Activated CD8-positive, alpha-beta memory T cell treated with anti-CD3 and anti-CD28 coated beads, Interleukin-2, amount 10 ng/mL, durations not matched to agents 7 days and 5 days (primary cell): ENCODE measurements at regions of chr2 and their contacts with region 1.

Region 1: DNA sequence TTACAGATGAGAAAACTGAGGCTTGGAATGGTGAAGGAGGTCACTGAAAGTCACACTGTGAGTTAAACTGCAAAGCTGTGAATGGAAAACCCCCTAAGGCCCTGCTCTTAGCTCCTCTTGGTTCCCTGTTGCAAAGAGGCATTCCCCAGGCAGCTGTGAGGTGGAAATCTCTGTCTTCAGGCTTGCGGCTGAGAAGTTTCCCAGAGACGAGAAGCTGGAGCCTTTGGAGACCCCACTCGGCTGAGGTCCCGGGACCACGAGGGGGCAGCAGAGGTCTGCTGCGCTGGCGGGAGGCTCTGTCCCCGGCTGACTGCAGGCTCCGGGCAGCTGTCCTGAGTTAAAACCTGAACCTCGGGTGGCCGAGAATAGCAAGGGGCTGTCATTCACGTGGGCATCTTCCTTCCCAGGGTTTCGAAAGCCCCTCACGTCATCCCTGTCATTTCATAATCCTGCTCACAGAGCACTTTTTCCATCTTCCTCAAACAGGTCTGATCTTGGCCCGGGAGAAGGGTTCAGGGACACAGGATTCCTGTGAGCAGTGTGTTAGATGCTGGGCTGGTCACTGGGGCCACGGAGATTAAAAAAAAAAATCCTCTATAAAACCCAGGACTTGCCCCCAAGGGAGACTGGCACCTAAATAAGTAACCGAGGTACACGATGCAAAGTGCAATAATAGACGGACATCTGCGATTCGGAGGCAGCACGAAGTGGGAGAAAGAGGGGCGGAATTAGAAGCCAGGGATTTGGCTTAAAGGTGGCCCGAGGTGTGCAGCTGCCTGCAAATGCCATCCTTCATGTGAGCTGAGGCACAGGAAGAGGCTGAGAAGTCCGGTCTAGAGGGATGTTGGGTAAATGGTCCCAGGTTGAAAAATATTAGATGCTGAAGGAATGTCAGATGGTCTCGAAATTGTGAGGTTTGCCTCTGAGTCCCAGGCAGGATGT is 24.6 kb upstream of the ATOH8 start:
- DNase-seq: peak; percentile 81
- ATAC-seq: peak; percentile 93
- H3K4me3 Mint-ChIP-seq: no peak overlapping the region
- H3K27ac Mint-ChIP-seq: no peak overlapping the region
- H3K4me1 Mint-ChIP-seq: peaks cover 9% of the 10 kb centered on the region
- H3K27me3 Mint-ChIP-seq: peaks cover 41% of the 10 kb centered on the region

Region 2: GRCh38 chr2:85642725-85643124 is 86.4 kb before region 1 on chr2:
- CTCF ChIA-PET with region 1: interaction called, 17 read pairs
- DNase-seq: peak; percentile 59
- ATAC-seq: peak; percentile 90
- H3K4me3 Mint-ChIP-seq: no peak overlapping the region
- H3K27ac Mint-ChIP-seq: peak overlapping the region; percentile 82
- H3K4me1 Mint-ChIP-seq: peaks cover 23% of the 10 kb centered on the region
- H3K27me3 Mint-ChIP-seq: no peaks in the 10 kb centered on the region

Region 3: DNA sequence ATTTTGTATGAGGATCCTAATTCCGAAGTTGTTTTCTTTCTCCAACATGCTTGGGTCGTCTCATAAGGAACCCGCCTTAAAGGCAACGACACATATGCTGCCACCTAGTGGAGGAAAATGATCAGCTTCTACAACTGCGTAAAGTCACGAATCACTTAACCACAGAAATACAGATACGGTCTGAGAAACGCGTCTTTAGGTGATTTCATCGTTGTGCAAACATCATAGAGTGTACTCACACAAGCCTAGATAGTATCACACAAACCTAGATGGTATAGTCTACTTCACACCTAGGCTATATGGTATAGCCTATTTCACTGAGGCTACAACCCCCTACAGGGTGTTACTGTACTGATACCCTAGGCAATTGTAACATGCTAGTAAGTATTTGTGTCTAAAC is 21.9 kb before region 1 on chr2:
- CTCF ChIA-PET with region 1: interaction called, 22 read pairs
- DNase-seq: peak; percentile 85
- ATAC-seq: peak; percentile 82
- H3K4me3 Mint-ChIP-seq: no peak overlapping the region
- H3K27ac Mint-ChIP-seq: peak overlapping the region; percentile 77
- H3K4me1 Mint-ChIP-seq: peaks cover 69% of the 10 kb centered on the region
- H3K27me3 Mint-ChIP-seq: peaks cover 17% of the 10 kb centered on the region

Region 4: GRCh38 chr2:85741833-85742455 is 12.8 kb after region 1 on chr2:
- CTCF ChIA-PET with region 1: interaction called, 20 read pairs
- DNase-seq: no peak
- ATAC-seq: no peak
- H3K4me3 Mint-ChIP-seq: no peak overlapping the region
- H3K27ac Mint-ChIP-seq: no peak overlapping the region
- H3K4me1 Mint-ChIP-seq: no peaks in the 10 kb centered on the region
- H3K27me3 Mint-ChIP-seq: peaks cover 83% of the 10 kb centered on the region

Region 5: GRCh38 chr2:85804583-85804982 is 75.4 kb after region 1 on chr2:
- CTCF ChIA-PET with region 1: interaction called, 12 read pairs
- DNase-seq: peak; percentile 58
- ATAC-seq: peak; percentile 51
- H3K4me3 Mint-ChIP-seq: no peak overlapping the region
- H3K27ac Mint-ChIP-seq: no peak overlapping the region
- H3K4me1 Mint-ChIP-seq: peaks cover 8% of the 10 kb centered on the region
- H3K27me3 Mint-ChIP-seq: peaks cover 23% of the 10 kb centered on the region

Region 6: GRCh38 chr2:85819811-85820510 is 90.8 kb after region 1 on chr2:
- CTCF ChIA-PET with region 1: interaction called, 93 read pairs
- DNase-seq: no peak
- ATAC-seq: no peak
- H3K4me3 Mint-ChIP-seq: no peak overlapping the region
- H3K27ac Mint-ChIP-seq: no peak overlapping the region
- H3K4me1 Mint-ChIP-seq: no peaks in the 10 kb centered on the region
- H3K27me3 Mint-ChIP-seq: peaks cover 47% of the 10 kb centered on the region

Region 7: DNA sequence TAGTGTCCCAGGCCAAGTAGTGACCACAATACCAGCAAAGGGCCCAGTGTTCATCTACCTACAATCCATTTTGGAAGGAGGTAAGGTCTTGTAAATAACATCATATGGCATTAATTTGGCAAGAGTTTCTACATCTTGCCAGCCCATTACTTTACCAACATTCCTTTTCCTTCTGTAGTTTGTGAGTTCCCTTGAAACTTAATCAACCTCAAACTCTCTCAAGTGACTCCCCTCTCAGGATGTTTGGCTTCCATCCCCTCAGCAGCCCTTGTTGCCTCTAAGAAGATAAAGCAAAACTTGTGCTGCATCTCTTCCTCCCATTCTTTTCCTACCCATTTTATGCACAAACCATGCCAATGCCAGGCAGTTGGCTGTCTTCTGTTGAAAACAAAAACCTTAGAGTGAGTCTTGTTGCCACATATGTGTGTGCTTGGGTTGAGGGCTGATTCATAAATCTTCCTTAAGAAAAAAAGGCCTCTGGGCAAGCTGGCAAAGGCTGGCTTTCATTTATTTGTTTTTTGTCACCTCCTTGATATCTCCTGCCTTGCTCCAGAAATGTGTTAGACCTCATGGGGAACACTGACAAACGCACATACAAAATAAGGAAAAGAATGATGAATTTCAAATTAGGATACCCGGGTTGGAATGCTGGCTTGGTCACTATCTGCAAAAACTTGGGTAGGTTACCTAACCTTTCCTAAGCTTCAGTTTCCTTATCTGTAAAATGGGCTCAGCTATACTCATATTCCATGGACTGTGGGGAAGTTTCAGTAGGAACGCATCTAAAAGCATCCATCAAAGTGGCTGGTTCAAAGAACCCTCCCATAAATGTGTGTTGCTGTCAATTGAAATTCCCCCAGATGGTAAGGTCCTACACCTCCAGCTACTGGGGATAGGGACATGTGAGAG is 189.0 kb after region 1 on chr2:
- CTCF ChIA-PET with region 1: no interaction called
- DNase-seq: no peak
- ATAC-seq: no peak
- H3K4me3 Mint-ChIP-seq: no peak overlapping the region
- H3K27ac Mint-ChIP-seq: no peak overlapping the region
- H3K4me1 Mint-ChIP-seq: peaks cover 6% of the 10 kb centered on the region
- H3K27me3 Mint-ChIP-seq: peaks cover 2% of the 10 kb centered on the region